ENCODE measurements at regions of chr12 and their contacts with region 1.

Region 1: DNA sequence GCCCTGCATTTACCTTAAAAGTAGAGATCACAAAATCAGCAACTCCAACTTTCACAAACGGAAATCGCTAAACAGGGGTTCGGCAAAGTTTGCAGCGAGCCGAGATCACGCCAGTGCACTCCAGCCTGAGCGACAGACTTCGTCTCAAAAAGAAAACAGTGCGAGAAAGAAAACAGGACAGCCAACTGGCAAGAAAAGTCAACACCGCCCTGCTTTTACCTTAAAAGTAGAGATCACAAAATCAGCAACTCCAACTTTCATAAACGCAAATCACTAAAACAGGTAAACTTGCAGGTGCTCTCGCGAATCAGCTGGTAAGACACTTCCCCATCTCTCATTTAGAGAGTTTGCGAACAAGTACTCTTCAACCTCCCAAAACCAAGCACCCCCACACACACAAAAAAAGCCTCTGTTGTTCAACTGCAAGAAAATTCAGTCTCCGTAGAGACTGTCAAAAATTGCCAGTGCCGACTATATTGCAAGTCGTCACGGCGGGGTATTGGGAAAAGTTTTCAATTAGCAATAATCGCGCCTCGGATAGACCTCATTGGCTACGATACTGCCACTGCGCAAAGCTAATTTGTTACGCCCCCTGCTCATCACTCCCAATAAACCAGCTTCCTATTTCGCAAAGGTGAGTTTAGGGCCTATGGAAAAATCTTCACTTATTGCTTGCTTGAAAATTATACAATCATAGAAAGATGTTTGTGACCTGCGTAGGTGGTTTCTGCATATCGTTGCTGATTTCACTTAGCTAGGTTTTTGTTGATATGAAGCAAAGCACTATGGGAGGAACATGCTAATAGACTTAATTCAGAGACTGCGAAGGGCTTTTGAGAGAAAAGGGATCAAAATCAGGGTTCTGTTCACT is at the start of gene RNU4-1:
- DNase-seq: peak; percentile 74
- H3K4me3 Mint-ChIP-seq: no peak within 1 kb of the TSS
- H3K27ac Mint-ChIP-seq: no peak within 1 kb of the TSS
- H3K4me1 Mint-ChIP-seq: no peaks in the 10 kb centered on the region
- H3K27me3 Mint-ChIP-seq: peaks cover 12% of the 10 kb centered on the region
- total RNA-seq, gene RNU4-1: 2,369 and 3,474 TPM in 2 replicates

Region 2: DNA sequence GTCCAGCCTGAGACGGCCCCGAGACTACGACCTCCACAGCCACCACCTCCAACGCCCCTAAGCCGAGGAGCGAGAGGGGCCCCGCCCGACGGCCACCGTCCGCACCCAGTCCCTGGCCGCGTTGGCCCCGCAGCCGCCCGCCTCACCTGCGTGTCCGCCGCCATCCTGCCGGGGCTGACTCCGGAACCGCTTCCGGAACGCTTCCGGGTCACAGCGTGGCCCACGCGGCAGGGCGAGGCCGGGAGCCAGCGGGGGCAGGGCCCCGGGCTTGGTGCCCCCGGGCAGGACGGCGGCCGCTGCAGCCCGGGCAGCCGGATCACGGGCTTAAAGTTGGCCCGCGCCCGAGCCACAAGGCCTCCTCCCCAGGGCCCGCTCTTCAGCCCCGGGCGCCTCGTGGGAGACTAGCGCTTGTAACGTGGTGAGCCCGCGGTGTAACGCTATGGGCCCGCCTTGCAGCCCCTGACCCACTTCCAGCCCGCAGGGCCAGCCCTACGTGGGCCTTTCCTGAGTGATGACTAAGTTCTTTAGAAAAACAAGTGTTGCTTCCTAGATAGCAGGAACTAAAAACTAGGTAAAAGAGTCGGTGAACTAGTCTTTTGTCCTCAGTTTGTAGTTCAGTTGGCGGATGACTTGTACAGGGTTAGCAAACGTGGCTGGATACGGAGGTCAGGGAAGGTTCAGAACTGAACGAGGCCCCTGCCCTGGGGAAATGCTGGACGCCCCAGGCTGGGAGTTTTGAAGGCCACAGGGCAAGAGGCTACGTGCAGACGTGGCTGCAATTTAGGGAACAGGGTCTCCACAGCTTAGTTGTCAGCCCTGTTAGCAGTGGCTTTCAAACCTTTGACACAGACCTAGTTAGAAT is 98.1 kb before region 1 on chr12 and contains the start of gene GCN1:
- intact Hi-C with region 1: loop called (anchors 1 kb)
- DNase-seq: peak; percentile 86
- H3K4me3 Mint-ChIP-seq: peak within 1 kb of the TSS; percentile 91
- H3K27ac Mint-ChIP-seq: peak within 1 kb of the TSS; percentile 96
- H3K4me1 Mint-ChIP-seq: peaks cover 60% of the 10 kb centered on the region
- H3K27me3 Mint-ChIP-seq: no peaks in the 10 kb centered on the region
- total RNA-seq, gene GCN1: 164 and 173 TPM in 2 replicates

Region 3: DNA sequence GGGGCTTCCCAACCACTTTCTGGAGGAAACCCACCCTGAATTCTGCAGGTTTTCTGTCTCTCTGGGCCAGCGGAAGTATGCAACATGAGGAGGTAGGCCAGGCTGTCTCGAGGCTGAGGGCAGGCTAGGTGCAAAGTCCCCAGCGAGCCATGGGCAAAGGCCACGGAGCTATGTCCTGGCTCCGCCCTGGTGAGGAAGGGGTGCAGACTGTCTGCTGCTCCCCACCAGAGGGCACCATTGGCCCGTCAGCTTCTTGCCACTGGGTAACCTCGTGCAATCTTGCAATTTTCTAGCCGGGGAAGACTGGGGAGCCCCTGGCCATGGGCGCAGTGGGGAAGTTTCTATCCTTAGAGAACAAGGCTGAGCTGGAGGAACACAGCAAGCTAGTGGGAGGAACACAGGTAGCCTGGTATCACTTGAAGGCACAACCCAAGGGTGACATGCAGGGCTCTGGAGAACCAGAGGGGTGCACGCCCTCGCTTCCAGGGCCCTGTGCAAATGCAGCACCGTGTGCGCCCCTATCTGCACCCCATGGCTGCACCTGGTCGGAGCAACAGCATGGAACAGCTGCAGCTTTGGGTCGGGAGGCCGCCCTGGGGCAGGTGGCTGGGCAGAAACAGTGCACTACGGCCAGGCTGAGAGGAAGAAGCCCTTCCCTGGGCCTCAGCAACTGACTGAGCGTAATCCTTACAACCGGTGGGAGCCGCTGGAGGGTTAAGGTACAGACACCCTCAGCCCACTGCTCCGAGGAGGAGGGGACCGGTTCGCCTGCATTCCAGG is 64.4 kb before region 1 on chr12:
- intact Hi-C with region 1: loop called (anchors 1 kb)
- DNase-seq: peak; percentile 80
- H3K4me3 Mint-ChIP-seq: peak overlapping the region; percentile 43
- H3K27ac Mint-ChIP-seq: peak overlapping the region; percentile 97
- H3K4me1 Mint-ChIP-seq: peaks cover 84% of the 10 kb centered on the region
- H3K27me3 Mint-ChIP-seq: no peaks in the 10 kb centered on the region

Region 4: DNA sequence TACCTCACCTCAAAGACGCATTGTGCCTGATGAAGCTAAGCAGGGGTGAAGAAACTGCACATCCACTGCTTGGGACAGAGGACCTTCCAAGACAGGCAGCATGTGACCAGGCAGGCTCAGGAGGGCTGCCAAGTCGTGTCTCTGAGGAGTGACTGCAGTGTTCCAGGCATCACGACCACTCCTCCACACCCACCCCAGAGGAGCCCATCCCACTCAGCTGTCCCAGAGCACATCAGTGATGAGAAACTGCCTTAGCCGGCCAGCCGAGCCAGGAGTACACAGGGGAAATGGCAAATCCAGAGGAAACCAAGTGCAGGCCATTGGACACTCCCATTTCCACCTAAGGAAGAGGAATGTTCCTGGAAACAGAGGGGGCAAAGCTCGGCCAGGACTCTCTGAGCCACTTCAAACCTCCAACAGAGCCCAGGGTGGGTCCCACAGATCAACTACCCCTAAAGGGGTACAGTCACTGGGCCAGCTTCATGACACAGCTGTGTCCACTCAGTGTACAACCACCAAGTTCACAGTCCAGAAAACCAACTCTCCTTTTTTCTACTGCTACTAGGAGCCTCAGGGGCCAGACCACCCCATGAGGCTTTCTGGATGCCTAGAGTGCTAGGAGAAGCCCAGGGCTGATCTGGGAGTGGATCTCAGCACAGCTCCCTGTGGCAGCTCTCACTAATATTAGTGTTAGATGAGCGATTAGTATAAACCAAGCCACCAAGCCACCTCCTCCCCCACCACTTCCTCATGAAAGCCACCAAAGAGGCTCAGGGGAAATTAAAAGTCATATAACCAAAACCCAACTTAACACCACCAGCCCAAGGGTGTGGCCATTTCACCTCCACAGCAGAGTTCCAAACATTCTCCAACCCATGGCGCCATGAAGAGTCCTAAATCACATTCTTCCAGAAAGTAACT is 42.8 kb before region 1 on chr12:
- intact Hi-C with region 1: loop called (anchors 1 kb)
- DNase-seq: peak; percentile 42
- H3K4me3 Mint-ChIP-seq: peak overlapping the region; percentile 73
- H3K27ac Mint-ChIP-seq: peak overlapping the region; percentile 53
- H3K4me1 Mint-ChIP-seq: peaks cover 77% of the 10 kb centered on the region
- H3K27me3 Mint-ChIP-seq: no peaks in the 10 kb centered on the region

Region 5: GRCh38 chr12:120265473-120266179 is 27.3 kb before region 1 on chr12 and contains the start of gene PXN:
- intact Hi-C with region 1: loop called (anchors 1 kb)
- DNase-seq: peak; percentile 87
- H3K4me3 Mint-ChIP-seq: peak within 1 kb of the TSS; percentile 97
- H3K27ac Mint-ChIP-seq: peak within 1 kb of the TSS; percentile 97
- H3K4me1 Mint-ChIP-seq: peaks cover 51% of the 10 kb centered on the region
- H3K27me3 Mint-ChIP-seq: no peaks in the 10 kb centered on the region
- total RNA-seq, gene PXN: 53.0 and 57.7 TPM in 2 replicates

Region 6: DNA sequence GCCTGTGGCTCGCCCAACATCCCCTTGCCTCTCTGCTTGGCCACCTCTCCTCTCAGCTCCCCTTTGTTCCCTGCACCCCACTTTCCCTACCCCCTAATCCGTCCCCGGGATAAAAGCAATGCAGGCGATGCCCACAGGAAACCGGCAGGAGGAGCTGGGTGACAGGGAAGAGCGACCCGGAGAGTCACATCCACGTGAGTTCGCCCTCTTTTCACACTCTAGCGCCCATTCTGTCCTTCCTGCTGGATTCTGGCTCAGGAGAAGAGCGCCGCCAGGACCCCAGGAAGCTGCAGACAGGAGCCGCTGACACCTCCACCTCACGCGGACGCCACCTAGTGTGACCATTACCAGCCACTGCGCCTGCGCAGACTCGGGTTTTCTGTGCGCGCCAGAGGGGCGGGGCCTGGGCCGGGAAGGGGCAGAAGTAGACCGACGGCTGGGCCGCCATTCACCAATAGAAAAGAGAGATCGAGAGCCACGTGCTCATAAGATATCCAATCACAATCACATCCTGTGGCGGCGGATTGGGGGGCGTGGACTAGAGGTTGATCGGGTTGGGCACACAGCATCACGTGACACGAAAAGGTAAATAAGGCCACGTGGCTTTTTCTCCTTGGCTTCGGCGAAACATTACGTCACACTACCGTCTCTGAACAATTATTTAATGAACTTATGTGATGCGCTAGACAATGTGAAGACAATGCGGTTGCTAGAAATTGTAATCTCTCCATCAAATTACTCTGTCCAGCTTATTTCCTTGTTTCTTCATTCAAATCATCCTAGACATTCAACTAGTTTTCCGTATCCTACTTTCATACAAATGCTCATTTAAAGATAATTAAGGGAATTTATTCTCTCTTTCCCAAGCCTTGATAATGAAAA is 24.6 kb after region 1 on chr12:
- intact Hi-C with region 1: loop called (anchors 1 kb)
- DNase-seq: peak; percentile 100
- H3K4me3 Mint-ChIP-seq: peak overlapping the region; percentile 89
- H3K27ac Mint-ChIP-seq: peak overlapping the region; percentile 92
- H3K4me1 Mint-ChIP-seq: peaks cover 16% of the 10 kb centered on the region
- H3K27me3 Mint-ChIP-seq: peaks cover 6% of the 10 kb centered on the region

Region 7: GRCh38 chr12:120437754-120438494 is 145.0 kb after region 1 on chr12 and contains the start of gene COX6A1:
- intact Hi-C with region 1: no loop called
- DNase-seq: peak; percentile 97
- H3K4me3 Mint-ChIP-seq: peak within 1 kb of the TSS; percentile 100
- H3K27ac Mint-ChIP-seq: peak within 1 kb of the TSS; percentile 98
- H3K4me1 Mint-ChIP-seq: peaks cover 31% of the 10 kb centered on the region
- H3K27me3 Mint-ChIP-seq: no peaks in the 10 kb centered on the region
- total RNA-seq, gene COX6A1: 352 and 365 TPM in 2 replicates

Measured in activated T-helper 1 cell treated with anti-CD3 and anti-CD28 coated beads, Interleukin-12 subunit alpha, Interleukin-12 subunit beta, Interleukin-2, Interleukin-4 antibody, amounts not matched to agents 30 ng/mL and 10 ng/mL and 1 ng/mL, durations not matched to agents 14 hours and 24 hours and 36 hours (primary cell).